Aorta (tissue), 5 donors: ENCODE measurements at regions of chr20 and their contacts with region 1.

Region 1: GRCh38 chr20:8756410-8756809 is 312.5 kb upstream of the PLCB4 start:
- DNase-seq: no peak
- ATAC-seq: no peak
- H3K4me3 ChIP-seq: no peak overlapping the region
- H3K27ac ChIP-seq: no peak overlapping the region
- H3K4me1 ChIP-seq: no peaks in the 10 kb centered on the region
- H3K27me3 ChIP-seq: no peaks in the 10 kb centered on the region

Region 2: DNA sequence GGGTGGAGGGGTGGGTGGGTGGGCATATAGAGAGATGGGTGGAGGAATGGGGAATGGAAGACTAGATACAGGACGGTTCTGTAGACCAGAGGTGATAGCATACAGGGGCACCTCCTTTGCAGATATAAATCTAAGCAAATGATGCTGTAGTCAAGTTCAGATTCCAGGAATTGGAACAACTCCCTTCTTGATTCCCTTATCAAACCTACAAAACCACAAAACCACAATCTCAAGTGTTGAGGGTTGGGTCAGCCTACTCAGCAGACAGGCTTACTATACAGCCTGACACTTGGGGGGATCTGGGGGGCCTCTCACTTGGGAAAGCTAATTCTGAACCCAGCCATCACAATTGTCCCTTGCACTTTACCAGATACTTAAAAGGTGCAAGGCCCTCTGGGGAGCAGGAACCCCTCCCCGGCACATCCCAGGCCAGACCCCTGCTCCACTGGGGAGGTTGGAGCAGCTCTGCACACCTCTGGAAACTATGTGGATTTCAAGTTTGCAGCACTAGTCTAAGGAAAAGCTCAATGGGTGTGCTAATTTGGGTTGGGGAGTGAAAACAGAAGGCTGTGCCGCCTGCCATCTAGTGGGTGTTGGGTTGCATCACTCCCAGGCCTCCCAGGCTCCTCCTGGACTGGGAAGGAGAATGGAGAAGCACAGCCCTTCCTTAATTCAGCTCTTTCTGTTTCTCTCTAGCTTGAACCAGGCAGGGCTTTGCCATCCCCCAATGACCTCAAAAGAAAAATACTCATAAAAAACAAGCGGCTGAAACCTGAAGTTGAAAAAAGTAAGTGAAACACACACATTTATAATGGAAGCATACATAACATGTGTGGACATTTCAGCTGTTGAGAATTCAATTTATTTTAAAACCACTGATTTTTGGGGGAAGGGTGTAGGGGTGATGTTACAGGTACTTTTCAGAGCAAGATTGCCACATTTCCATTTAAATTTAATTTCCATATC is 636.8 kb after region 1 on chr20:
- intact Hi-C with region 1: loop called (anchors 5 kb)
- DNase-seq: peak; percentile 81 to 86
- ATAC-seq: peak; percentile 92
- H3K4me3 ChIP-seq: no peak overlapping the region
- H3K27ac ChIP-seq: no peak overlapping the region
- H3K4me1 ChIP-seq: peaks cover 3 to 7% of the 10 kb centered on the region in 2 donors
- H3K27me3 ChIP-seq: no peaks in the 10 kb centered on the region